ENCODE measurements at regions of chr14 and their contacts with region 1.

Region 1: DNA sequence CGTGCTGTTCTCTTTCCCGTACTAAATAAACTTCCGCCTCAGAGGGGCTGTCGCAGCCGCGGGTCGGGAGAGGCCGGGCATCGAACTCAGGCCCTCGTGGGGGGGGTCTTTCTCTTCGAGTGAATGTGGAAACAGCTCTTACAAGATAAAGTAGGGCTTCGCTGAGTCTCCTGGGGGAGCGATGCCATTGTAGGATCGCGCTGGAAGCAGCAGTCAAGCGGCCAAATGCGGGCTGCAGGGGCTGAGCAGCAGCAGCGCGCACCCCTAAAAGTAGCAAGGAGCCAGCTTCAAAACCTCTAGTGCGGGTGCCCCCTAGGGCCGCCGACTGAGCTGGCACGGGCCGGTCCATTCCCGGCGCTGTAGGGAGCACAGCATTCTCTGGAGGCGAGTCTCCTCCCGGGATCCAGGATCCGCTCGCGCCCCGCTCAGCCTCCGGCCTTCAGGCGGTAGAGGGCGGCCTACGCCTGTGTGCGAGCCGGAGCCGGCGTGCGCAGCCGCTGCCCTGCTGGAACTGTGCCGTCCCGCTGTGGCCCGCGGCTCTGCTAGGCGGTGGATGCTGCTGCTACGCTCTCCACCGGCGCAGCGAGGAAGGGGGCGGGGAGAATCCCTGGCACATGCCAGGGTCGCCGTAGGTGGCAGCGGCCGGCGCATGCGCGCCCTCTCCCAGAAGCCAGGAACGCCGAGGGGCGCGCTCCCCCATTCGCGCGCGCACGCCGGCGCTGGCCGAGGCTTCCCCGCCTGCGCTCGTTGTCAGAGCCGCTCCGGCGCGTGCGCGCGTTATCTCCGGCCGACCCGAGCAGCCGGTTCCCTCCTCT is at the start of gene FUT8:
- DNase-seq: peak; percentile 92 to 93
- H3K4me3 ChIP-seq: peak within 1 kb of the TSS; percentile 72
- H3K4me3 Mint-ChIP-seq: peak within 1 kb of the TSS; percentile 84
- H3K27ac Mint-ChIP-seq: peak within 1 kb of the TSS; percentile 86
- H3K4me1 ChIP-seq: peaks cover 11% of the 10 kb centered on the region
- H3K4me1 Mint-ChIP-seq: no peaks in the 10 kb centered on the region
- H3K27me3 ChIP-seq: no peaks in the 10 kb centered on the region
- H3K27me3 Mint-ChIP-seq: no peaks in the 10 kb centered on the region
- CTCF ChIP-seq: peak; percentile 42 to 58
- total RNA-seq, gene FUT8: 63.0 and 67.1 TPM in 2 replicates

Region 2: DNA sequence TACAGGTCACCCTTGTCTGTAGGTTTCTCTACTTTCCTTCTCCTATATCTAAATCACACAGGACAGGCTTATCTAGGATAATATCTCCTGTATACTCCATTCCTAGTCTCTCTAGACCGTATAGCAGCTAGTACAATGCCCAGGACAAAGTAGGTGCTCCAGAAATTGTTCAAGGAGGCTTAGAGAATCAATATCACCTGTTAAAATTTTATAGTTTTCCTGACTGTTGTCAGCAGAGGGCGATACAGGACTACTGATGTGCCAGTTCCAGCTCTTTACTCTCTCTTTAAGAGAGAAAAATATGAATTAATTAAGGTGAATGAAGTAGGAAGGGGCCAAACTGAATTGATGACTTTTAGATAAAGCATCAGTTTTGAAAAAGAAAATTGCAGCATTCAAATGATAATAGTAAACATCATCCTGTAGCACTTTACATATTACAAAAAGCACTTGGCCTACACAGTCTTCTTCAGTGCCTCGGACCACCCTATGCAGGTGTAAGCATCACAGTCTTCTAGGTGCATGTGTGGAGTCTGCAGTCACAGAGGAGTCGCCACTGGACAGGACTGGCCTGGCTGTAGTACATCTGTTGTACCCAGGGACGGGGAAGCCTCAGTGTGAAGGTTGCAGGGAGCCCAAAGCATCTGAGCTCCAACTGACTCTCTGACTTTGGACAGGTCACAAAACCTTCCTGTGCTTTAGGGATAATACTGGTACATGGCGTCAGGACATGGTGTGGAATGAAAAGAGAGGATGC is 248.0 kb before region 1 on chr14:
- CTCF ChIA-PET with region 1: interaction called, 20 read pairs
- POLR2A ChIA-PET with region 1: interaction called, 5 read pairs
- intact Hi-C with region 1: loop called (anchors 1 kb)
- DNase-seq: peak in 1 of 2 experiments; percentile 62
- H3K4me3 ChIP-seq: no peak overlapping the region
- H3K4me3 Mint-ChIP-seq: no peak overlapping the region
- H3K27ac Mint-ChIP-seq: peak overlapping the region; percentile 36
- H3K4me1 ChIP-seq: peaks cover 8% of the 10 kb centered on the region
- H3K4me1 Mint-ChIP-seq: peaks cover 6% of the 10 kb centered on the region
- H3K27me3 ChIP-seq: no peaks in the 10 kb centered on the region
- H3K27me3 Mint-ChIP-seq: no peaks in the 10 kb centered on the region
- CTCF ChIP-seq: peak; percentile 68 to 81

Region 3: GRCh38 chr14:65255536-65256461 is 156.4 kb before region 1 on chr14:
- CTCF ChIA-PET with region 1: interaction called, 26 read pairs
- POLR2A ChIA-PET with region 1: interaction called, 11 read pairs
- intact Hi-C with region 1: loop called (anchors 1 kb)
- DNase-seq: peak; percentile 94 to 97
- H3K4me3 ChIP-seq: peak overlapping the region; percentile 13; the same call in 1 of the 2 replicates
- H3K4me3 Mint-ChIP-seq: peak overlapping the region; percentile 65
- H3K27ac Mint-ChIP-seq: peak overlapping the region; percentile 90
- H3K4me1 ChIP-seq: peaks cover 58% of the 10 kb centered on the region
- H3K4me1 Mint-ChIP-seq: peaks cover 37% of the 10 kb centered on the region
- H3K27me3 ChIP-seq: no peaks in the 10 kb centered on the region
- H3K27me3 Mint-ChIP-seq: no peaks in the 10 kb centered on the region
- CTCF ChIP-seq: peak in 1 of 2 experiments; percentile 45

Region 4: GRCh38 chr14:65302571-65303189 is 109.6 kb before region 1 on chr14:
- CTCF ChIA-PET with region 1: interaction called, 5 read pairs
- POLR2A ChIA-PET with region 1: interaction called, 6 read pairs
- intact Hi-C with region 1: loop called (anchors 5 kb)
- DNase-seq: no peak
- H3K4me3 ChIP-seq: no peak overlapping the region
- H3K4me3 Mint-ChIP-seq: peak overlapping the region; percentile 12
- H3K27ac Mint-ChIP-seq: peak overlapping the region; percentile 80
- H3K4me1 ChIP-seq: peaks cover 67% of the 10 kb centered on the region
- H3K4me1 Mint-ChIP-seq: peaks cover 44% of the 10 kb centered on the region
- H3K27me3 ChIP-seq: no peaks in the 10 kb centered on the region
- H3K27me3 Mint-ChIP-seq: no peaks in the 10 kb centered on the region
- CTCF ChIP-seq: no peak

Region 5: DNA sequence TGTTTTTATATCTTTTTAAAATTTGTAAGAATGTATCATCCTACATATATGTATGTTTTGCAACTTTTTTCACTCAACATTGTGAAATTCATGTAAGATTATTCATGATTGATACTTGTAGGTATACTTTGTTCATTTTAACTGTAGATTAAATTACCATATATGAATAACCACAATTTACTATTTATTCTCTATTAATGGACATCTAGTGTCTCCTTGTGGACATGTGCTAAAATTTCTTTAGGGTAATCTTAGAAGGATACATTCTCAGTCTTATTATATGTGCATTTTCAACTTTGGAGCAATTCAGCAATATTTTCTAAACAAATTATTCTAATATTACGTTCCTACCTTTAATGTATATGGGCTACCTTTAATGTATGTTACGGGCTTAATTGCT is 192.7 kb after region 1 on chr14:
- CTCF ChIA-PET with region 1: no interaction called
- POLR2A ChIA-PET with region 1: no interaction called
- intact Hi-C with region 1: loop called (anchors 5 kb)
- DNase-seq: no peak
- H3K4me3 ChIP-seq: no peak overlapping the region
- H3K4me3 Mint-ChIP-seq: no peak overlapping the region
- H3K27ac Mint-ChIP-seq: no peak overlapping the region
- H3K4me1 ChIP-seq: no peaks in the 10 kb centered on the region
- H3K4me1 Mint-ChIP-seq: no peaks in the 10 kb centered on the region
- H3K27me3 ChIP-seq: no peaks in the 10 kb centered on the region
- H3K27me3 Mint-ChIP-seq: no peaks in the 10 kb centered on the region
- CTCF ChIP-seq: peak in 1 of 2 experiments; percentile 12

Region 6: GRCh38 chr14:65832431-65833266 is 420.4 kb after region 1 on chr14:
- CTCF ChIA-PET with region 1: interaction called, 13 read pairs
- POLR2A ChIA-PET with region 1: no interaction called
- intact Hi-C with region 1: no loop called
- DNase-seq: no peak
- H3K4me3 ChIP-seq: no peak overlapping the region
- H3K4me3 Mint-ChIP-seq: no peak overlapping the region
- H3K27ac Mint-ChIP-seq: no peak overlapping the region
- H3K4me1 ChIP-seq: no peaks in the 10 kb centered on the region
- H3K4me1 Mint-ChIP-seq: no peaks in the 10 kb centered on the region
- H3K27me3 ChIP-seq: peaks cover 2% of the 10 kb centered on the region; the same call in 1 of the 2 replicates
- H3K27me3 Mint-ChIP-seq: peaks cover 21% of the 10 kb centered on the region
- CTCF ChIP-seq: peak in 1 of 2 experiments; percentile 27